Natural killer cell (primary cell): ENCODE measurements at regions of chr5 and their contacts with region 1.

Region 1: GRCh38 chr5:181005791-181006190 is 17.1 kb downstream of the BTNL3 start:
- DNase-seq: no peak
- ATAC-seq: no peak
- H3K4me3 ChIP-seq: no peak overlapping the region
- H3K4me3 Mint-ChIP-seq: no peak overlapping the region
- H3K27ac ChIP-seq: no peak overlapping the region
- H3K27ac Mint-ChIP-seq: no peak overlapping the region
- H3K4me1 ChIP-seq: no peaks in the 10 kb centered on the region
- H3K4me1 Mint-ChIP-seq: no peaks in the 10 kb centered on the region
- H3K27me3 ChIP-seq: no peaks in the 10 kb centered on the region
- H3K27me3 Mint-ChIP-seq: no peaks in the 10 kb centered on the region
- CTCF ChIP-seq: no peak

Region 2: DNA sequence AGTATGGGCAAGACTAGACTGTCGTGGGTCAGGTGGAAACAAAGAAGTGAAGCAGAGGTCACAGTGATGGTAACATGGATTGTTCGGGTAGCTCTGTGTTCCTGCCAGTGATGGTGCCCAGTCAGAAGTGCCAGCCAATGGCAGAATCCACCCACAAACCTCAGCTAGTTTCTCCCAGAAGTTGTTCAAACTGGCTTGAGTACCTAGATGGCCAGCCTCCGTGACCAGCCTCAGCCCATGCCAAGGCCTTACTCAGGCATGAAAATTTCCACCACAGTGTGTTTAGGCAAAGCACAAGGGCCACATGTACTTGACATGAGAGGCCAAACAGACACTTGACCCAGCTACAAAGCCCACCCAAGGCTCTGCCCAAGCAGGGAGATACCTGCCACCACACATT is 14.9 kb after region 1 on chr5:
- intact Hi-C with region 1: loop called (anchors 1 kb)
- DNase-seq: no peak
- ATAC-seq: no peak
- H3K4me3 ChIP-seq: no peak overlapping the region
- H3K4me3 Mint-ChIP-seq: no peak overlapping the region
- H3K27ac ChIP-seq: no peak overlapping the region
- H3K27ac Mint-ChIP-seq: no peak overlapping the region
- H3K4me1 ChIP-seq: no peaks in the 10 kb centered on the region
- H3K4me1 Mint-ChIP-seq: no peaks in the 10 kb centered on the region
- H3K27me3 ChIP-seq: peaks cover 3% of the 10 kb centered on the region
- H3K27me3 Mint-ChIP-seq: peaks cover 21 to 23% of the 10 kb centered on the region in 2 donors
- CTCF ChIP-seq: no peak